ENCODE measurements at regions of chr1 and their contacts with region 1.

Region 1: GRCh38 chr1:28779751-28780408 is 32.1 kb upstream of the OPRD1 start:
- DNase-seq: no peak
- H3K4me3 ChIP-seq: no peak overlapping the region
- H3K4me3 Mint-ChIP-seq: no peak overlapping the region
- H3K27ac Mint-ChIP-seq: peak overlapping the region; percentile 21
- H3K4me1 ChIP-seq: no peaks in the 10 kb centered on the region
- H3K4me1 Mint-ChIP-seq: peaks cover 8% of the 10 kb centered on the region
- H3K27me3 ChIP-seq: no peaks in the 10 kb centered on the region
- H3K27me3 Mint-ChIP-seq: no peaks in the 10 kb centered on the region
- CTCF ChIP-seq: no peak

Region 2: DNA sequence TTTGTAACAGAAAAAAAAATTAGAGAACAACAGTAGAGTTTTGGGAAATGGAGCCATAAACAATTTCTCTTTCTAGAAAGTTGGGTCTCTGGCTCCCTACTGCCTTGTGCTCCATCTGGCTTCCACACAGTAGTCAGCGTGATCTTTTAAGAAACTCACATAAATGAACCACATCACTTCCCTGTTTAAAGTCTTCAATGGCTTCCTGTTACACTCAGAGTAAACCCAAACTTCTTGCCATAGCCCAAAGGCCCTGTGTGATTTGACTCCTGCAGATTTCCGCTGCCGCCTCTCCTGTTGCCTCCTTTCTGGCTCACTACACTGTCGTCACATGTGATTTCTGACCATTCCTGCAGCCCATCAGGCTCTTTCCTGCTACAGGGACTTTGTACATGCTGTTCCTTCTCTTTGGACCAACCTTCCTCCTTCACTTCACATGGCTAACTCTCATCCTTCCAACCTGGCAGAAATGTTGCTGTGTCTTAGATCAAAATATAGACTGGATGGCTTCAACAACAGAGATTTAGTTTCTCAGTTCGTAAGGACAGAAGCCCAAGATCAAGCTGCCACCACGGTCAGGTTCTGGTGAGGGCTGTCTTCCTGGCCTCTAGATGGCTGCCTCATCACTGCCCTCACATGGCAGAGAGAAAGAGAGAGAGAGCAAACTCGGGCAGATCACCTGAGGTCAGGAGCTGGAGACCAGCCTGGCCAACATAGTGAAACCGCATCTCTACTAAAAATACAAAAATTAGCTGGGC is 66.1 kb after region 1 on chr1:
- CTCF ChIA-PET with region 1: interaction called, 3 read pairs
- POLR2A ChIA-PET with region 1: no interaction called
- intact Hi-C with region 1: loop called (anchors 1 kb)
- DNase-seq: peak; percentile 24 to 47
- H3K4me3 ChIP-seq: no peak overlapping the region
- H3K4me3 Mint-ChIP-seq: no peak overlapping the region
- H3K27ac Mint-ChIP-seq: no peak overlapping the region
- H3K4me1 ChIP-seq: no peaks in the 10 kb centered on the region
- H3K4me1 Mint-ChIP-seq: peaks cover 3% of the 10 kb centered on the region
- H3K27me3 ChIP-seq: no peaks in the 10 kb centered on the region
- H3K27me3 Mint-ChIP-seq: no peaks in the 10 kb centered on the region
- CTCF ChIP-seq: peak; percentile 18 to 26

Region 3: DNA sequence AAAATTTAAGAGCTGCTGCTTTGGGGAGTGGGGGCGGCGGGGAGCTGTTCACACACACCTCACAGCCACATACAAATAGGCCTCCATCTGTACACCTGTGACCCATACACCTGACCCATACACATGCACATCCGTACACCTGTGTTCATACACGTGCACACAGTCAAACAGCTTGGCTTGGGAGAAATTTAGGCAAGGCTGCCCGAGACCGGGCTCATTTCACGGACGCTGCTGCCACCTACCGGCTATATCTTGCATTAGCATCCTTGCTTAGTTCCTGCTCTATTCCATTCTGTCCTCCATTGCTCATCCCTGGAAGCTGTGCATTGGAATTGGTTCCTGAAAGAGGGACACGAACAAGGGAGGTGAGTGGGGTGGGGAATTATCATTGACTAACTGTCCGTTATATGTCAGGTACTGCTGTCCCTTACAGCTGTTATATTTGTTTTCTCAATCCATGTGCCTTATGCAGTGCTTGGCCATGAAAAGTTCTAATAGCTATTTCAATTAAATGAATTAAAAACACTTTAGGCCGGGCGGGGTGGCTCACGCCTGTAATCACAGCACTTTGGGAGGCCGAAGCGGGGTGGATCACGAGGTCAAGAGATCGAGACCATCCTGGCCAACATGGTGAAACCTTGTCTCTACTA is 97.4 kb after region 1 on chr1:
- CTCF ChIA-PET with region 1: interaction called, 47 read pairs
- POLR2A ChIA-PET with region 1: no interaction called
- intact Hi-C with region 1: loop called (anchors 1 kb)
- DNase-seq: peak; percentile 63 to 80
- H3K4me3 ChIP-seq: no peak overlapping the region
- H3K4me3 Mint-ChIP-seq: no peak overlapping the region
- H3K27ac Mint-ChIP-seq: no peak overlapping the region
- H3K4me1 ChIP-seq: peaks cover 6% of the 10 kb centered on the region
- H3K4me1 Mint-ChIP-seq: peaks cover 11% of the 10 kb centered on the region
- H3K27me3 ChIP-seq: no peaks in the 10 kb centered on the region
- H3K27me3 Mint-ChIP-seq: no peaks in the 10 kb centered on the region
- CTCF ChIP-seq: peak; percentile 52 to 73

Region 4: GRCh38 chr1:29033829-29034466 is 254.1 kb after region 1 on chr1:
- CTCF ChIA-PET with region 1: no interaction called
- POLR2A ChIA-PET with region 1: no interaction called
- intact Hi-C with region 1: loop called (anchors 10 kb)
- DNase-seq: peak in 1 of 2 experiments; percentile 12
- H3K4me3 ChIP-seq: no peak overlapping the region
- H3K4me3 Mint-ChIP-seq: no peak overlapping the region
- H3K27ac Mint-ChIP-seq: no peak overlapping the region
- H3K4me1 ChIP-seq: no peaks in the 10 kb centered on the region
- H3K4me1 Mint-ChIP-seq: no peaks in the 10 kb centered on the region
- H3K27me3 ChIP-seq: no peaks in the 10 kb centered on the region
- H3K27me3 Mint-ChIP-seq: no peaks in the 10 kb centered on the region
- CTCF ChIP-seq: peak; percentile 26 to 58

Measured in Caco-2 (cell line).